PC-9 (cell line): ENCODE measurements at regions of chr17 and their contacts with region 1.

Region 1: GRCh38 chr17:34420254-34420766 is 57.3 kb upstream of the CCL1 start:
- DNase-seq: peak; percentile 46 to 47
- H3K4me3 ChIP-seq: no peak overlapping the region
- H3K27ac ChIP-seq: no peak overlapping the region
- H3K4me1 ChIP-seq: no peaks in the 10 kb centered on the region
- H3K27me3 ChIP-seq: peaks cover 36% of the 10 kb centered on the region
- CTCF ChIP-seq: peak; percentile 92

Region 2: DNA sequence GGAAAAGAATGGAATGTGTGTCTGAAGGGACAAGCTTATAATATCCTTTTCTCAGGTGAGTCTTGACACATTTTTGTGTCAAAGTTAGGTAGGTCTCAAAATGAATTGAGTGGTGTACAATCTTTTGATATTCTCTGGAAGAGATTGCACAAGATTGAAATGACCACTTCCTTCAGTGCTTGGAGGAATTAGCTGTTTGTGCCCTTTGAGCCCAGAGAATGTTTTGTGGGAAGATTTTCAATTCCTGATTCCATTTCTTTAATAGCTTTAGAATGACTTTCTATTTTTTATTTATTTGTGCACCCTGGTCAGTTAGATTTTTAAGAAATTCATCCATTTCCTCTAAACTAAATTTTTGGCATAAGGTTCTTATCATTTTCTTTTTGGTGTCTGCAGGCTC is 65.7 kb before region 1 on chr17:
- CTCF ChIA-PET with region 1: no interaction called
- POLR2A ChIA-PET with region 1: no interaction called
- intact Hi-C with region 1: no loop called
- DNase-seq: no peak
- H3K4me3 ChIP-seq: no peak overlapping the region
- H3K27ac ChIP-seq: no peak overlapping the region
- H3K4me1 ChIP-seq: no peaks in the 10 kb centered on the region
- H3K27me3 ChIP-seq: no peaks in the 10 kb centered on the region
- CTCF ChIP-seq: no peak

Region 3: DNA sequence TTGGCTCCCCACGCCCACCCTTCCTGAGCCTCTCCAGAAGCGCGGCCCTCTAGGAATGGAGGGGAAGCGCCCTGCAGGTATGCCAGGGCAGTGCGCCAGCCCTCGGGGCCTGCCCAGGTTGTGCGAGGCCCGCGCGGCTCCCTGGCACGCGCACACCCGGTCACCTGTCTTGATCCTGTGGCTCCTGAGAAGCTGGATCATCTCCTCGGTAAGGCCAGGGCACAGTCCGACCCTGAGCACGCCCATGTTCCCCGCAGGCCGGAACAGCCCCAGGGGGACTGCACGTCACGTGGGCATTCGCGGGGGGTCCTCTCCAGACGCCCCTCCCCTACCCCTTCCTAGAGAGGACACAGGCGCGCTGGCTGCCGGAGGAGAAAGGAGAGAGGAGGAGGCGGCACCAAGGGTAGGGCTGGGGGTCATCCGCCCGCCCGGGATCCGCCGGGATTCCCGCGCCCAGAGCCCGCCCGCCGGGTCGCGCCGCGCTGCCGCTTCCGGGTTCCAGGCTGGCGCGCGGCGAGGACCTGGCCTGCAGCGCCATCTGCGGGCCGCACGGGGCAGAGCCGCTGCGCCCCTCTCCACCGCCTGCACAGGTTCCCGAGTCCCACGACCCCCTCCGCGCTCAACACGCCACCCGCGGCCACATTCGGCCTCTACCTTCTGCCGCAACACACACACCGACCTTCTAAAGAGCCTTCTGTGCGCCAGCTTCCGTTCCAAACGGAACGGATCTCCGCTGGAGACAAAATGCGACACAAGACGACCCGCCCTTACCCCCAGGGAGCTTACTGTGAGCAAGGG is 699.3 kb after region 1 on chr17 and contains the start of gene RAD51D:
- CTCF ChIA-PET with region 1: no interaction called
- POLR2A ChIA-PET with region 1: no interaction called
- intact Hi-C with region 1: loop called (anchors 2 kb)
- DNase-seq: peak; percentile 47 to 76
- H3K4me3 ChIP-seq: peak within 1 kb of the TSS; percentile 74
- H3K27ac ChIP-seq: no peak within 1 kb of the TSS
- H3K4me1 ChIP-seq: peaks cover 9% of the 10 kb centered on the region; the same call in 1 of the 2 replicates
- H3K27me3 ChIP-seq: no peaks in the 10 kb centered on the region
- CTCF ChIP-seq: peak; percentile 83
- total RNA-seq, gene RAD51D: 7.8 and 9.7 TPM in 2 replicates